GM10248 (cell line): ENCODE measurements at regions of chr7 and their contacts with region 1.

Region 1: DNA sequence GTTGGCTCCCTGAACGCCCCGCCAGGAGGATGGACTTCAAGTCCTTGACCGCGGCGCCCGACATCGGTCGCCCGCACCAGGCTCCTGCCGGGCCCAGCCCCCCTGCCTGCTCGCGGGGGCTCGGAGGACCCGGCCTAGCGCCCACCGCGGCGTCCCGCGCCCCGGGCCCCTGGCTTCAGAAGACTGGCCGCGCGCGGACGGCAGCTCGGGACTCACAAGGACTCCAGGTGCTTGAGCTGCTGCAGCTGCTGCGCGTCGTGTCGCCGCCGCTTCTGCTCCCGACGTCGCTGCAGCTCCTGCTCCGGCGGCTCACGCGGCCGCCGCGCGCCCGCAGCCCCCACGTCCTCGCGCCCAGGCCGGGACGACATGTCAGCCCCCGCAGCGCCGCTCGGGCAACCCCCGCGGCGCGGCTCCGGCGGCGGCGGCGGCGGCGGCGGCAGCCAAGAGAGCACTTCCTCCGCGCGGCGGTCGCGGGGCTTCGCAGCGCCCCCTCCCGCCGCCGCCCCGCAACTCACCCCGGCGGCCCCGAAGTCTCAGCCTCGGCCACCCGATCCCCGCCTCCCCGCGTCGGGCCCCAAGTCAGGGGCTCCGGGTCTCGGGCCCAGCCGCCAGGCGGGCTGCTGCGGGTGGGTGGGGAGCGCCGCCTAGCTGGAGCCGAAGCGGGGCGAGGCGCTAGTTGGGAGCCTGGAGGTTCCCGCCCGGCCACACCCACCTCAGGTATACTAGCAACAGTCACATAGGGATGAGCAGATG is at the start of gene RP9:
- DNase-seq: peak; percentile 89
- CTCF ChIP-seq: peak; percentile 80

Region 2: DNA sequence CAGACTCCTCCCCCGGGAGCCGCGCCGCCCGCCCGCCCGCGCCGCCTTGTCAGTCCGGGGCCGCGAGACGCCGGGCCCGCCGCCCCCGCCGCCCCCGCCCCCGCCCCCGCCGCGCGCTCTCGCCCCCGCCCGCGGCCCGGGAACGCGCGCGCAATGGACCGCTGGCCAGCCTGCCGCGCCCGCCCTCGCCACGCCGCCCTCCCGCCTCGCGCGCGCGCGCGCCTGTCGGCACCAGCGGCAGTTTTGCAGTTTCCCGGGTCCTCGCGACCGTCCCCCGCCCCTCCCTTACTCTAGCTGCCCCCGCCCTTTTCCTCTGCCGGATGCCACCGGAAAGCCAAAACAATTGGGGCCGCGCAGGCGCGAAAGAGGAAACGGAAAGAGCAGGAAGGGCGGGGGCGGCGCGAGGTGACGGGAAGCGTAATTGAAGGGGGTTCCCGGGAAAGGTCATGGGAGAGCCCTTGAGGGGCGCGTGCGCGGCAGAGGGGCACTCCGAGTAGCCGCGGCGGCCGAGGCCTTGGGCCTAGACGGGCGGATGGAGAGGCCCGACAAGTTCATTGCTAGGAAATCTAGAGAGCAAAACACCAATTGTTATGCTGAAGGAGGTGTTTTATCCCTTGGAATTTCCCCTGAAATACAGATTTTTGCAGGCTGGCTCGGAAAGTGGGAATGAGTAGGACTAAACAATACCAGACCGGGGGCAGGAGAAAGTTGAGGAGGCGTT is 217.2 kb before region 1 on chr7:
- CTCF ChIA-PET with region 1: interaction called, 10 read pairs
- POLR2A ChIA-PET with region 1: no interaction called
- DNase-seq: peak; percentile 91
- CTCF ChIP-seq: no peak

Region 3: DNA sequence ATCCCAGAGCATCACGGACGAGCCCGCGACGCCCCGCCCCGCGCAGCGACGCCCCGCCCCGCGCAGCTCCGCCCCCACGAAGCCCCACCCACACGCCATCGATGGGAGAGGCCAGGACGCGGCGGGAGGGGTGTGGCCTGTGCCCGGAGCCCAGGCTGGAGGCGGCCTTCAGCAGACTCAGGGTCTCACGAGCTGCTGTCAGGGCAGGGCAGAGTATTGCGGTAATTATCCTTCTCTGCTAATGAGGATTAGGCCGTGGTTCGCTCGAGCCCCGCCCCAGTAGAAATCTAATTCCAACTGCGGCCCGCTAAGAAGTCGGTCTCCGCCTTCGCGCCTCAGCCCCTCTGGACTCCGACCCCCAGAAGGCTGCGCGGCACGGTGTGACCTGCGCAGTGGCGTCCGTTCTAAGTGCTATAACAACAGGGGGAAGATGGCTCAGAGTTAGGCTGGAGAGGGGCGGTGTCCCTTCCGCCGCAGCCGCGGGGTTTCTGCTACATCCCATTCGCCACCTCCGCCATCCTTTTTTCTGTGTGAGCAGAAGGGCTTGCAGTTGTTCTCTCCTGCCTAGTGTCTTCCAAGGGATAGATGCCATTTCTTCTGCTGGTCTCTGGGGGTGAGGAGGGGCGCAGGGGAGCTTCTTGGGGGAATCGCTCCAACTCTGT is 46.3 kb before region 1 on chr7:
- CTCF ChIA-PET with region 1: interaction called, 16 read pairs
- POLR2A ChIA-PET with region 1: no interaction called
- DNase-seq: peak; percentile 96
- CTCF ChIP-seq: no peak

Region 4: DNA sequence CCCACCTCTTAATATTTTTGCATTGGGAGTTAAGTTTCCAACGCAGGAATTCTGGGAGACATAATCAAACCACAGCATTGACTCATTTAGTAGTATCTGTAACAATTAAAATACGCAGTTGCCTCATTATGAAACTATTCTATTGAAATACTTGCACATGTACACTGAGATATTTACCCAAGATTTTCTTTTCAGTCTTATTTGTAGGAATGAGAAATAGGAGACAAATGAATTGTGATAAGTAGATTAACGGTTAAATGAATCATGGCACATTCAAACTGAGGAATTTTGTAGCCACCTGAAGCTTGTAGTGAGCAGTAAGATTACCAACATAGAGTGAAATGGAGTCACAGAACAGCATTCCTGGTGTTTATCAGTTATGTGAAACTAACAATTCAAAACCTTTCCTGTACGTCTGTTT is 18.1 kb before region 1 on chr7:
- CTCF ChIA-PET with region 1: interaction called, 18 read pairs
- POLR2A ChIA-PET with region 1: no interaction called
- DNase-seq: no peak
- CTCF ChIP-seq: no peak

Region 5: GRCh38 chr7:33128990-33129805 is 20.0 kb after region 1 on chr7 and contains the start of gene BBS9:
- CTCF ChIA-PET with region 1: interaction called, 42 read pairs
- POLR2A ChIA-PET with region 1: no interaction called
- DNase-seq: peak; percentile 94
- CTCF ChIP-seq: no peak

Region 6: GRCh38 chr7:33379891-33380543 is 270.8 kb after region 1 on chr7:
- CTCF ChIA-PET with region 1: no interaction called
- POLR2A ChIA-PET with region 1: no interaction called
- DNase-seq: no peak
- CTCF ChIP-seq: no peak